Ascending aorta (tissue), 2 donors: ENCODE measurements at regions of chr2 and their contacts with region 1.

Region 1: GRCh38 chr2:231925303-231926179 is 655 bp downstream of the NPPC start:
- DNase-seq: peak in 1 of 2 donors; percentile 80
- H3K4me3 ChIP-seq: peak overlapping the region; percentile 50 to 63
- H3K27ac ChIP-seq: no peak overlapping the region
- H3K4me1 ChIP-seq: peaks cover 8 to 9% of the 10 kb centered on the region in 2 donors
- H3K27me3 ChIP-seq: no peaks in the 10 kb centered on the region
- CTCF ChIP-seq: peak; percentile 62 to 87 (median 71)

Region 2: DNA sequence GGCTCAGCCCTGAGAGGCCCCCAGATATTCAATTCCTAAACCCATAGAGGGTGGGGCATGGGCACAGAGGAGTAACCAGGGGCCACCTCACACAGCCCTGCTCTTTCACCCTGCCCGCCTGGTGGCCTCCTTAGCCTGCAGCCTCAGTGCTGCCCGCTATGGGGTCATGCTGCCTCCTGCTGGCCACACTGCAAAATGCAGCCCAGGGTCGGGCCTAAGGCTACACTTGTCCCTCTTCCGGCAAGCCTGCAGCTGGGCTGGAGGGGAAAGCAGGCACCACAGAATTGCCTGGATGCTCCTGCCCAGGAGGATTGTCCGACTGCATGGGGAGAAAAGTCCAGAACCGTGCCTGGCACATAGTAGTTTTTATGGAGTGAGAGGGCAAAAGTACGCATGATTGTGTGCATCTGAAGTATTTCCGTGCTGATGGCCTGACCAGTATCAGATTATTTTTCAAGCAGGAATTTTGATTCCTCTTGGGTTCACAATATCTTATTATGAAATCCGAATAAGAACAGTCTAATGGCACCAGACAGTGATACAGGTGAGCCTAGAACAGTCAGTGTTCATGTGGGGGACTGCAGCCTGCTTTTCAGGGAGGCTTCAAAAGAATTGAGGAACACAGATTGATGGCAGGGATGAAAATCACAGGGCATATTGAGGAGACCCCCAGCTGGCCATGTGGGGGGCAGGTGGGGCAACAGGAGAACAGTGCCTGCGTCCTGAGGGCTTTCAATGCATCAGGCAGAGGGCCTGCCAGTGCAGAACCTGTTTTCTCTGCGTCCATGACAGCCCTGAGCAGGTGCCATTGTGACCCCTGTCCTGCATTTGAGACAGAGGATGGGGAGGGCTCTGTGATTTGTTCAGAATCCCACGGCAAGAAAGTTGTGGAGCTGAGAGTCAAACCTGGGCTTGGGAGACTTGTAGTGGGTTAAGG is 401.8 kb after region 1 on chr2:
- intact Hi-C with region 1: loop called (anchors 5 kb)
- DNase-seq: peak in 1 of 2 donors; percentile 79
- H3K4me3 ChIP-seq: no peak overlapping the region
- H3K27ac ChIP-seq: no peak overlapping the region
- H3K4me1 ChIP-seq: no peaks in the 10 kb centered on the region
- H3K27me3 ChIP-seq: no peaks in the 10 kb centered on the region
- CTCF ChIP-seq: peak; percentile 45 to 69 (median 63)

Region 3: DNA sequence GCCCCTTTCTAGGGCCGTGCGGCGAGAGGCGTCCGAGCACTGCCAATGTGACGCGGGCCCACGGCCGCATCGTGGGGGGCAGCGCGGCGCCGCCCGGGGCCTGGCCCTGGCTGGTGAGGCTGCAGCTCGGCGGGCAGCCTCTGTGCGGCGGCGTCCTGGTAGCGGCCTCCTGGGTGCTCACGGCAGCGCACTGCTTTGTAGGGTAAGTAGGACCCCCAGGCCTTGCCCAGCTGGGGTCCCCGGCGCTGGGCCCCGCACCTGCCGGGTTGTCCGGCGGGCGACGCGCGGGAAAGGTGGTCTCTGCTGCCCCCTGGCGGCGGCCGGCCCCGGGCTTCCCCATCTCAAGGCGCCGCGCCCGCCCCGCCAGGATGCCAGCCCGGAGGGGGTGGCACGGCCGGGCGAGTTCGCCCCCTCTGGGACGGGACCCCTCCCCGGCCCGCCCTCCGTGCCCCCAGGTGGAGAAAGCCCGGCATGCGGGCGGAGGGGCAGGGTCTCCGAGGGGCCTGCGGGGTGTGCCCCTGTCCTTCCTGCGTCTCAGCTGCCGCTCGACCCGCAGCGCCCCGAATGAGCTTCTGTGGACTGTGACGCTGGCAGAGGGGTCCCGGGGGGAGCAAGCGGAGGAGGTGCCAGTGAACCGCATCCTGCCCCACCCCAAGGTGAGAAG is 596.5 kb after region 1 on chr2:
- intact Hi-C with region 1: loop called (anchors 10 kb)
- DNase-seq: no peak
- H3K4me3 ChIP-seq: peak overlapping the region; percentile 47 to 56
- H3K27ac ChIP-seq: no peak overlapping the region
- H3K4me1 ChIP-seq: peaks cover 15 to 20% of the 10 kb centered on the region in 2 donors
- H3K27me3 ChIP-seq: peaks cover 29% of the 10 kb centered on the region
- CTCF ChIP-seq: peak; percentile 57 to 76 (median 75)